MCF 10A (cell line): ENCODE measurements at regions of chr12 and their contacts with region 1.

Region 1: DNA sequence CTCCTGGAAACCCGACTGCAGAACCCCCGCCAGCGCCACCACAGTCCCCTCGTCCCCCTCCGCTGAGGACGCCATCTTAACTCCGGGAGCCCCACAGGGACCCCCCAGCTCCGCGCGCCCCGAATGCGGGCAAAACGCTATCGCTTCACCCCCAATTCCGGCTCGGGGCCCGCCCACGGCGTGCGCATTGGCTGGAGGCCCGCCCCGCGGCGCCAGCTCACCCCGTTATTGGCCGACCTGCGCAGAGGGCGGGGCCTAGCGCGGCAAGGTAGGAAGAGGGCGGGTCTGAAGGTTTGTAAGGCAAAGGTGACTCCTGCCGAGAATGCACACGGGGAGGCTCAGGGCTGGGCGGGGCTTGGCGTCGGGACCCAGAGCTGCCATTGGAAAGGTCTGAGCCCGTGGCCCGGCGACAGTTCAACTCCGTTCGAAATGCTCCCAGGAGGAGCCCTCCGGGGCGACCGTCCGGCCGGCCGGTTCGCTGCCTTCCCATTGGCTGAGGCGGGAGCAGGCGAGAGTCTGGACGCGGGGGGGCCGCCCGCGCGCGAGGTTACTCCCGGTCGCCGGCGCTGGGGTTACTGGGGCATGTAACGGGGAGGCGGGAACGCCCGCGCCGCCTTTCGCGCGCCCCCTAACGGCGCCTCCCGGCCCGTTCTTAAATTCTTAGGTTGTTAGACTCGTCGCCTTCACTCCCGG is at the start of gene LPCAT3:
- DNase-seq: peak; percentile 96
- H3K4me3 Mint-ChIP-seq: peak within 1 kb of the TSS; percentile 80
- H3K27ac Mint-ChIP-seq: peak within 1 kb of the TSS; percentile 29
- H3K4me1 Mint-ChIP-seq: peaks cover 32% of the 10 kb centered on the region
- H3K27me3 Mint-ChIP-seq: no peaks in the 10 kb centered on the region
- CTCF ChIP-seq: peak; percentile 77
- total RNA-seq, gene LPCAT3: 14.4 and 15.4 TPM in 2 replicates

Region 2: GRCh38 chr12:6975297-6976027 is 43.0 kb before region 1 on chr12:
- CTCF ChIA-PET with region 1: interaction called, 5 read pairs
- POLR2A ChIA-PET with region 1: interaction called, 29 read pairs
- intact Hi-C with region 1: loop called (anchors 2 kb)
- DNase-seq: no peak
- H3K4me3 Mint-ChIP-seq: no peak overlapping the region
- H3K27ac Mint-ChIP-seq: no peak overlapping the region
- H3K4me1 Mint-ChIP-seq: peaks cover 16% of the 10 kb centered on the region
- H3K27me3 Mint-ChIP-seq: no peaks in the 10 kb centered on the region
- CTCF ChIP-seq: no peak

Region 3: GRCh38 chr12:6998708-6999451 is 19.6 kb before region 1 on chr12:
- CTCF ChIA-PET with region 1: interaction called, 8 read pairs
- POLR2A ChIA-PET with region 1: interaction called, 44 read pairs
- intact Hi-C with region 1: no loop called
- DNase-seq: peak; percentile 71
- H3K4me3 Mint-ChIP-seq: no peak overlapping the region
- H3K27ac Mint-ChIP-seq: no peak overlapping the region
- H3K4me1 Mint-ChIP-seq: peaks cover 31% of the 10 kb centered on the region
- H3K27me3 Mint-ChIP-seq: no peaks in the 10 kb centered on the region
- CTCF ChIP-seq: no peak

Region 4: DNA sequence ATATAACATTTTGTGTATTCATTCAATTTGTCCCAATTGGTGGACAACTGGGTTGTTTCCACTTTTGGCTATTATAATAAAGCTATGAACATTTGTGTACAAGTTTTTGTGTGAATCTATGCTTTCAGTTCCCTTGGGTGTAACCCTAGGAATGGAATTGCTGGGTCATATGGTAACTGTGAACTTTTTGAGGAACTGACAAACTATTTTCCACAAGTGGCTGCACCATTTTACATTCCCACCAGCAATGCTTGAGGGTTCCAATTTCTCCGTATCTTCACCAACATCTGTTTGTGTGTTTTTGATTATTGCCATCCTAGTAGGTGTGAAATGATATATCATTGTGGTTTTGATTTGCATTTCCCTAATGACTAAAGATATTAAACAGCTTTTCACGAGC is 13.2 kb before region 1 on chr12:
- CTCF ChIA-PET with region 1: interaction called, 8 read pairs
- POLR2A ChIA-PET with region 1: interaction called, 44 read pairs
- intact Hi-C with region 1: no loop called
- DNase-seq: no peak
- H3K4me3 Mint-ChIP-seq: no peak overlapping the region
- H3K27ac Mint-ChIP-seq: no peak overlapping the region
- H3K4me1 Mint-ChIP-seq: no peaks in the 10 kb centered on the region
- H3K27me3 Mint-ChIP-seq: no peaks in the 10 kb centered on the region
- CTCF ChIP-seq: no peak

Region 5: DNA sequence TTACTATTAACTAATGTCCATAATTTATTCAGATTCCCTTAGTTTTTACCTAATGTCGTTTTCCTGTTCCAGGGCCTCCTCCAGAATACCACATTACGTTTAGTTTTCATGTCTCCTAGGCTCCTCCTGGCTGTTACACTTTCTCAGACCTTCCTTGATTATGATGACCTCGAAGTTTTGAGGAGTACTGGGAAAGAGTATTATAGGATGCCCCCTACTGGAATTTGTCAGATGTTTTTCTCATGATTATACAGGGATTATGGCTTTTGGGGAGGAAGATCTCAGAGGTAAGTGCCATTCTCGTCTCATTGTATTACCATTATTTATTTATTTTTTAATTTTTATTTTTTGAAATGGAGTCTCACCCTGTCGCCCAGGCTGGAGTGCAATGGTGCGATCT is 24.3 kb after region 1 on chr12:
- CTCF ChIA-PET with region 1: interaction called, 6 read pairs
- POLR2A ChIA-PET with region 1: interaction called, 10 read pairs
- intact Hi-C with region 1: loop called (anchors 2 kb)
- DNase-seq: peak; percentile 71
- H3K4me3 Mint-ChIP-seq: no peak overlapping the region
- H3K27ac Mint-ChIP-seq: peak overlapping the region; percentile 25
- H3K4me1 Mint-ChIP-seq: peaks cover 23% of the 10 kb centered on the region
- H3K27me3 Mint-ChIP-seq: no peaks in the 10 kb centered on the region
- CTCF ChIP-seq: peak; percentile 34